Uterus (tissue), 4 donors: ENCODE measurements at regions of chr17 and their contacts with region 1.

Region 1: DNA sequence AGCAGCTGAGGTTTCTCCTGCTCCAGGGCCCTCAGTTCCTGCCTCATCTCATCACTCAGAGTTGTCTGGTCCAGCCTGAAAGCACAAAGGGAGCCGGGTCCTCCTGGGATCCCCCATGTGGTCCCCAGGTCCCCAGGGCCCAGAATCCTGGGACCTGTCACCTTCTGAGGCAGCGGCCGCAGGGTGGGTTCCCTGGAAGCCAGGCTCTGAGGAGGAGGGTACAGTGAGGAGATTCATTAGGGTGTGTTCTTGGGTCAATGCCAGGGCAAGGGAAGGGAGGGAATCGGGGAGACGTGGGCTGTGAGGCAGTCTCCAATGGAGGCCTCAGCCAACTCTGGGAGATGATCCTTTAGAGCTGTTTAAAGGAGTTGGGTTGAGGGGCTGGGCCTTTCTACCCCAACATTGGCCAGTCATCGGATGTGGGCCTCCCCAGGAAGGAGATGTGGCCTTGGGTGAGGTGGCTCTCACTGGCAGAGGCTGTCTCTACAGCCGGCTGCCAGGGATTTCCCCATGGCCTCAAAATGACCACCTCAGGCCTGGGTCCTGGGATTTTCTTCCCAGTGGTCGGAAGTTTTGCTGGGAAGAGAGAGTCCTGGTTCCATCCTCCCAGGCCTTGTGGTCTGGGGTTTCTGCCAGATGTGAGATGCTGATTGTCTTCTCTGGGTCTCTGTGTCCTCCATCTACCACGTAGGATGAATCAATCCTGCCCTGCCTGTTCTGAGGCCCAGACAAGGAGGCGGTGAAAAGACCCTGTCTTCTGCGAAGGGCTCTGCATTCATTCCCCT is 47.3 kb downstream of the NLRP1 start:
- DNase-seq: no peak
- H3K4me3 ChIP-seq: no peak overlapping the region
- H3K27ac ChIP-seq: no peak overlapping the region
- H3K4me1 ChIP-seq: no peaks in the 10 kb centered on the region
- H3K27me3 ChIP-seq: no peaks in the 10 kb centered on the region
- CTCF ChIP-seq: no peak
- POLR2A ChIP-seq: no peak

Region 2: DNA sequence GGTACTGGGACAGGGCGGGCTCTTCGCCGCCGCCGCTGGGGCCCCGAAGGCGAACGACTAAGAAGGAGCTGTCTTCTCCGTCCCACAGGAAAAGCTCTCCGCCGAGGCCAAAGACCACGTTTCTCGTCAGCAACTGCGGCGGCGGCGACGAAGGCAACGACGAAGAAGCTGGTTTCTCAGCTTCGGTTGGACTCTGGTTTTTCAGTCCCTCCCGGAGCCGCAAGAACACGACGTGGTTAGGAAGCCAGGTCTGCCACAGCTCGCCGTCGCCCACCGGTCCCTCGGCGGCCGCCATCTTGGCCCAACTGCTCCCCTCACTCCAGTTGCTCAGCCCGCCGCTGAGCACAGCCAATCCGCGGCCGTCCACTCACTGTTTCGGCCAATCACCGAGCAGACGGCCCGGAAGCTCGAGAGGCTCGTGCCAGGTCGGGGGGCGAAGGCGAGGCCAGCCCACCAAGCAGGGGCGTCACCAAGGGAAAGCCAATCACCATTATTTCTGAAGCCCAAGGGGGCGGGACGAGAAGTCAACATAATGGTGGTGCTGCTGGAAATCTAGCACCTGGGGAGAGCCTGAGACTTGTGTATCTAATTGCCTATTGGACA is 117.6 kb before region 1 on chr17 and contains the start of gene NUP88:
- intact Hi-C with region 1: no loop called
- DNase-seq: peak; percentile 95 to 97
- H3K4me3 ChIP-seq: peak within 1 kb of the TSS; percentile 74 to 87
- H3K27ac ChIP-seq: peak within 1 kb of the TSS; percentile 92
- H3K4me1 ChIP-seq: peaks cover 0 to 6% of the 10 kb centered on the region in 2 donors
- H3K27me3 ChIP-seq: no peaks in the 10 kb centered on the region
- CTCF ChIP-seq: peak in 1 of 4 experiments; percentile 3
- POLR2A ChIP-seq: peak; percentile 57 to 80
- total RNA-seq, gene NUP88: 24.7 to 69.8 (median 52.3) TPM

Region 3: DNA sequence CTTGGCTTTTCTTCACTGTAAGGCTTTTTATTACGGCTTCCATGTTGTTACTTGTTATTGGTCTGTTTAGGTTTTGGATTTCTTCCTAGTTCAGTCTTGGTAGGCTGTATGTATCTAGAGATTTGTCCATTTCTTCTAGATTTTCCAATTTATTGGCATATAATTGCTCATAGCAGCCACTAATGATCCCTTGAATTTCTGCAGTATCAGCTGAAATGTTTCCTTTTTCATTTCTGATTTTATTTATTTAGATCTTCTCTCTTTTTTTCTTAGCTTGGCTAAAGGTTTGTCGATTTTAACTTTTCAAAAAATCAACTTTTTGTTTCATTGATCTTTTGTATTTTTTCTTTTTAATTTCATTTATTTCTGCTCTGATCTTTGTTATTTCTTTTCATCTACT is 28.8 kb after region 1 on chr17:
- intact Hi-C with region 1: loop called (anchors 2 kb)
- DNase-seq: no peak
- H3K4me3 ChIP-seq: no peak overlapping the region
- H3K27ac ChIP-seq: no peak overlapping the region
- H3K4me1 ChIP-seq: no peaks in the 10 kb centered on the region
- H3K27me3 ChIP-seq: no peaks in the 10 kb centered on the region
- CTCF ChIP-seq: no peak
- POLR2A ChIP-seq: no peak

Region 4: DNA sequence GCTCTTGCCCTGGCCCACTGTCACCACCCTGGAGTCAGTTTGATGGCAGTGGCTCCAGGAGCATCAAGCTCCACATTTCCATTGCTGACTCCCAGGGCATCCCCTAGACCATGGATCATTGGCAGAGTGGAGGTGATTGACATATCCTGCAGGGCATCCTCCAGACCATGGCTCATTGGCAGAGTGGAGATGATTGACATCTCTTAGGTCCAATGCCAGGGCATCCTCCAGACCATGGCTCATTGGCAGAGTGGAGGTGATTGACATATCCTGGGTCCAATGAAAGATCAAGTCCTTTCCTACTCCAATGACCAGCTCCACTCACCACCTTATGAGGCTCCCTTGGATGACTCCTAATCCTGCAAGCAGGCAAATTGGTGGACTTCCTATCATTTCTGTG is 221.6 kb after region 1 on chr17:
- intact Hi-C with region 1: no loop called
- DNase-seq: no peak
- H3K4me3 ChIP-seq: no peak overlapping the region
- H3K27ac ChIP-seq: no peak overlapping the region
- H3K4me1 ChIP-seq: no peaks in the 10 kb centered on the region
- H3K27me3 ChIP-seq: no peaks in the 10 kb centered on the region
- CTCF ChIP-seq: no peak
- POLR2A ChIP-seq: no peak